ENCODE measurements at regions of chr18 and their contacts with region 1.

Region 1: DNA sequence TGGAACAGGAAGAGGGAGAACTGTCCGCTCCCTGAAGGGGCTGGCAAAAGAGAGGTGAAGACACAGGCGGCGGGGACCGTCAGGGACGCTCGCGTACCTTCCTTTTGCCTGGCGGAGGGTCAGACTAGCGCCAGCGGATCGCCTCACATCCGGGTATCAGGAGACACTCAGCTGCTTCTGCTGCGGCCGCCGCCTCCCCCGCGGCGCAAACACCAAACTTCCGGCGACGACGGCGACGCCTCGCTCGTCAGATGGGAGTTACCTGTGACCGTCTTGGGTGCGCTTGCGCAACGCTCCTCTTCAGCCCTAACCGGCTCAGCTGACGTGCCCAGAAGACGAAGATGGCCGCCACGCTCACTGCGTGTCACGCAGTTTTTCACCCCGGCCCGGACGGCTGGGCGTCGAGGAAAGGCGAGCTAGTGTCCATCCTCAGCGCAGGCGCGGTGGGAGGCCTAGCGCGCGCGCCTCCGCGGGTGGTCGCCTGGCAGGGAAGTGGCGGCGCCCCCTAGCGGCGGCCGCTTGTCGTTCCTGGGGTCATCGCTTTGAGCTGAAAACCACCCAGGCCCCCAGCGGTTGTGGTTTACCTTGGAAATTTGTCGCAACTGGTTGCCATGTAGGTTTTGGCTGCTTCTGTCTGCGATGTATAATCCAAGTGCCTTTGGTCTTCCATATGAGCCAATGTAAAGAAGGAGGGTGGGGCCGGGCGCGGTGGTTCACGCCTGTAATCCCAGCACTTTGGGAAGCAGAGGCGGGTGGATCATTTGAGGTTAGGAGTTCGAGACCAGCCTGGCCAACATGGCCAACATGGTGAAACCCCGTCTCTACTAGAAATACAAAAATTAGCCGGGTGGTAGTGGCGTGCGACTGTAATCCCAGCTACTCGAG is at the start of gene ESCO1:
- ATAC-seq: peak; percentile 88 to 95 (median 93)
- H3K4me3 ChIP-seq: peak within 1 kb of the TSS; percentile 59 to 86 (median 67)
- H3K27ac ChIP-seq: peak within 1 kb of the TSS; percentile 92 to 96
- H3K4me1 ChIP-seq: peaks cover 7 to 14% of the 10 kb centered on the region in 2 donors
- total RNA-seq, gene ESCO1: 13.8 to 38.2 (median 24.2) TPM

Region 2: GRCh38 chr18:21740724-21741510 is 140.1 kb after region 1 on chr18 and contains the start of gene MIB1:
- in situ Hi-C with region 1: loop called in 1 of 9 experiments (anchors 25 kb)
- ATAC-seq: peak; percentile 61 to 81 (median 78)
- H3K4me3 ChIP-seq: peak within 1 kb of the TSS; percentile 65 to 89 (median 87)
- H3K27ac ChIP-seq: peak within 1 kb of the TSS; percentile 93 to 97
- H3K4me1 ChIP-seq: peaks cover 2 to 17% of the 10 kb centered on the region in 2 donors
- total RNA-seq, gene MIB1: 28.5 to 82.2 (median 45.1) TPM

Measured in motor neuron (in vitro differentiated cells).